ENCODE measurements at regions of chr7 and their contacts with region 1.

Region 1: DNA sequence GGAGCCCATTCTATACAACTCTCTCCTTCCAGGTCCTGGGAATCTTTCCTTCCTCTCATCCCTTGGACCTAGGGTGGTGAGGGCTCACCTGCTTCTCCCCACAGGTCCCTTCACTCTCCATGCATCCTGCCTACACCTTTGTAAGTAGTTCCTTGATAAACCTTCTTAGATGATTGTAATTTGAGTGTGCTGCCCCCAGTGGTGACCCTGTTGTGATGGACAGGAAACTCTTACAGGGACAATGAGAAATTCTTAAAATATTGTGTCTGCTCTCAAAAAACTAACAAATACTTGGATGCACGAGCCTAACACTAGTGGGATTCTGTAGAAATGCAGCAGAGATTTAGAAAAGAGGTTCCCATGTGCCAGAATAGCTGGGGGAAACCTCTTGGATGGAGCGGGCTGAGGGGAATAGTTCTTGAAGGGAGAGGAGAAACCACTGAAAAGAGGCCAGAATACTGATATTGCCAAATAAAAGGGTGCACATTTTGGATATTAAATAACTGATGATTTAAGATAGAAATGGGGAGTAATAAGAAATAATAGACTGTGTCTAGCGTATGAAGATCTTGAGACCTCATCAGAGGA is 6.7 kb upstream of the PAXIP1 start:
- DNase-seq: peak; percentile 41
- ATAC-seq: peak; percentile 47
- H3K4me3 ChIP-seq: no peak overlapping the region
- H3K4me3 Mint-ChIP-seq: no peak overlapping the region
- H3K27ac ChIP-seq: no peak overlapping the region
- H3K27ac Mint-ChIP-seq: no peak overlapping the region
- H3K4me1 ChIP-seq: peaks cover 0 to 4% of the 10 kb centered on the region in 2 donors
- H3K4me1 Mint-ChIP-seq: peaks cover 3% of the 10 kb centered on the region
- H3K27me3 ChIP-seq: no peaks in the 10 kb centered on the region
- H3K27me3 Mint-ChIP-seq: no peaks in the 10 kb centered on the region
- CTCF ChIP-seq: peak; percentile 69

Region 2: DNA sequence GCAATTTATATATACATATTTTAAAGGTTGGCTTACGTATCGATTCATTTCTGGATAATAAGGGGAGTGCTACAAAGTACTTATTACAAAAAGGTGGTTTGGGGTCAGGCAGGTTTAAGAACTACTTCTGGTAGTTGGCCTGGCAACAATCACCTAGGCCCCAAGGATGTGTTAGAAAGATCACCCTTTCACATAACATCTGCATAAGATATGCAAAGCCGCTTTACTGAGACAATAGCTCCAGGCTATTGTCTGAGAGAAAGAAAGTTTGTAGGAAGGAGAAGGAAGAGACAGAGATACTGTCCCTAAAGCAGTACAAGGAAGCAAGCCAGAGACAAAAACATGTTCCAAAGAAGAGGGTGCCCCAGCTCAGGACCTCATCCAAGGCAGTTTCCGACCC is 12.9 kb before region 1 on chr7:
- CTCF ChIA-PET with region 1: interaction called, 25 read pairs
- POLR2A ChIA-PET with region 1: no interaction called
- intact Hi-C with region 1: no loop called
- DNase-seq: no peak
- ATAC-seq: no peak
- H3K4me3 ChIP-seq: no peak overlapping the region
- H3K4me3 Mint-ChIP-seq: no peak overlapping the region
- H3K27ac ChIP-seq: no peak overlapping the region
- H3K27ac Mint-ChIP-seq: no peak overlapping the region
- H3K4me1 ChIP-seq: peaks cover 1 to 2% of the 10 kb centered on the region in 2 donors
- H3K4me1 Mint-ChIP-seq: peaks cover 2% of the 10 kb centered on the region
- H3K27me3 ChIP-seq: no peaks in the 10 kb centered on the region
- H3K27me3 Mint-ChIP-seq: no peaks in the 10 kb centered on the region
- CTCF ChIP-seq: no peak

Region 3: DNA sequence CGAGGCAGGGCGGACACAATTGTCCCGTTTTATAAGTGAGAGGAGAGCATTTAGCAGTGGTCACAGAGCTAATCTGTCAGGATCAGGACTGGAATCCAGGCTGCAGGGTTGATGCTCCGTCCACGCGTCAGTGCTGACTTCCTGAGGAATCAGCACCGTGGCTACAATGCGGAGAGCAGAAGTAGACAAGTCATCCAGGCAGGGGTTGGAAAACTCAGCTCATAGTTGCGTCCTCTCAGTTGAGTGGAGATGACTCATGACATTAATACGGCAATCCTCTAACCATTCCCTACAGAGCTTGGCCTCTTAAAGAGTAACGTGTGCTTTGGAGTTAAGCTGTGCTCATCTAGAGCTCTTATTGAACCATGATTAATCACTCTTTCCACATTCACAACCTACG is 43.3 kb after region 1 on chr7:
- CTCF ChIA-PET with region 1: no interaction called
- POLR2A ChIA-PET with region 1: no interaction called
- intact Hi-C with region 1: no loop called
- DNase-seq: no peak
- ATAC-seq: no peak
- H3K4me3 ChIP-seq: no peak overlapping the region
- H3K4me3 Mint-ChIP-seq: no peak overlapping the region
- H3K27ac ChIP-seq: no peak overlapping the region
- H3K27ac Mint-ChIP-seq: no peak overlapping the region
- H3K4me1 ChIP-seq: no peaks in the 10 kb centered on the region
- H3K4me1 Mint-ChIP-seq: no peaks in the 10 kb centered on the region
- H3K27me3 ChIP-seq: peaks cover 0 to 5% (median 1%) of the 10 kb centered on the region in 4 experiments
- H3K27me3 Mint-ChIP-seq: peaks cover 19% of the 10 kb centered on the region
- CTCF ChIP-seq: no peak

Measured in B cell (primary cell).